Naive thymus-derived CD8-positive, alpha-beta T cell (primary cell): ENCODE measurements at regions of chr2 and their contacts with region 1.

Region 1: GRCh38 chr2:96913398-96914202 is 43.7 kb upstream of the SEMA4C start:
- DNase-seq: peak; percentile 26 to 78 (median 44)
- ATAC-seq: peak; percentile 82 to 85
- H3K4me3 Mint-ChIP-seq: peak overlapping the region; percentile 73 to 95 (median 88)
- H3K27ac Mint-ChIP-seq: peak overlapping the region; percentile 87 to 98 (median 96)
- H3K4me1 Mint-ChIP-seq: peaks cover 37 to 79% (median 66%) of the 10 kb centered on the region in 4 donors
- H3K27me3 Mint-ChIP-seq: no peaks in the 10 kb centered on the region

Region 2: GRCh38 chr2:96891491-96892333 is 21.9 kb before region 1 on chr2:
- POLR2A ChIA-PET with region 1: interaction called, 30 read pairs
- DNase-seq: peak in 1 of 10 donors; percentile 47
- ATAC-seq: peak; percentile 74 to 82
- H3K4me3 Mint-ChIP-seq: peak overlapping the region in 9 of 10 donors; percentile 1 to 72 (median 42)
- H3K27ac Mint-ChIP-seq: peak overlapping the region; percentile 4 to 80 (median 54)
- H3K4me1 Mint-ChIP-seq: peaks cover 35 to 62% (median 58%) of the 10 kb centered on the region in 4 donors
- H3K27me3 Mint-ChIP-seq: no peaks in the 10 kb centered on the region

Region 3: DNA sequence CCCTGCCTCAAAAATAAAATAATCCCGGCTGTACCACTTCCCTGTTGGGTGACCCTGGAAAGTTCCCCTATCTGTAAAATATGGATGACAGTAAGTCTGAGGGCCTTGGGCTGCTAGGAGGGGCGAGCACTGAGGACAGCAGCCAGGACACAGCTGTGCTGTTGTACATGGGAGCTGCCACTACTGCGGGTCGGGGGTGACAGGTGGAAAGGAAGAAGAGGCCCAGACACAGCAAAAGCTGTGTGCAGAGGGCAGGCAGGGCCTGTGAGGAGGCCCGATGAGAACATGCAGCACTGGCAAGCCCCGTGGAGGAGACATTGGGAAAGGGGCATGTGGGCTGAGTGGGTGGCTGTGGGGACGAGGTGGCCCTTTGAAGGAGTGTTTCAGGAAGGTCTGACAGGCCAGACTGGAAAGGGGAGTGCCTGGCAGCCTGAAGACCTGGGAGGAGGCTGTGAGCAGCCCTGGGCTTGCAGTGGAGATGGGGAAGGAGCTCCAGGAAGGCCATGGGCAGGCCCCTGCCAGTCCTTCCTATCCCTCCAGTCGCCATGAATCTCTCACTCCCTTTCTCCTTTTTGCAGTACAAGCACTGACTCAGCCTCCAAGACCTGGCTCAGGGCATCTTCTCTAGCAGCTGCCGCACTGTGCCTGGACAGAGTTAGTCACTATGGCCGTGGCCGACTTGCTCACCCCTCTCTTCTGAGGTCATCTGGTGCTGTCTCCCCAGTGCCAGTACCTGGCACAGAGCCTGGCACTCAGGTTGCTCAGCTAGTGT is 14.8 kb before region 1 on chr2:
- POLR2A ChIA-PET with region 1: interaction called, 13 read pairs
- DNase-seq: no peak
- ATAC-seq: no peak
- H3K4me3 Mint-ChIP-seq: no peak overlapping the region
- H3K27ac Mint-ChIP-seq: peak overlapping the region in 3 of 10 donors; percentile 6 to 19 (median 18)
- H3K4me1 Mint-ChIP-seq: peaks cover 28 to 55% (median 34%) of the 10 kb centered on the region in 4 donors
- H3K27me3 Mint-ChIP-seq: no peaks in the 10 kb centered on the region

Region 4: GRCh38 chr2:96984300-96984699 is 70.7 kb after region 1 on chr2:
- POLR2A ChIA-PET with region 1: no interaction called
- DNase-seq: no peak
- ATAC-seq: no peak
- H3K4me3 Mint-ChIP-seq: no peak overlapping the region
- H3K27ac Mint-ChIP-seq: no peak overlapping the region
- H3K4me1 Mint-ChIP-seq: no peaks in the 10 kb centered on the region
- H3K27me3 Mint-ChIP-seq: peaks cover 0 to 2% (median 0%) of the 10 kb centered on the region in 5 donors